Right ventricle myocardium inferior (tissue), 1 donor: ENCODE measurements at regions of chr22 and their contacts with region 1.

Region 1: DNA sequence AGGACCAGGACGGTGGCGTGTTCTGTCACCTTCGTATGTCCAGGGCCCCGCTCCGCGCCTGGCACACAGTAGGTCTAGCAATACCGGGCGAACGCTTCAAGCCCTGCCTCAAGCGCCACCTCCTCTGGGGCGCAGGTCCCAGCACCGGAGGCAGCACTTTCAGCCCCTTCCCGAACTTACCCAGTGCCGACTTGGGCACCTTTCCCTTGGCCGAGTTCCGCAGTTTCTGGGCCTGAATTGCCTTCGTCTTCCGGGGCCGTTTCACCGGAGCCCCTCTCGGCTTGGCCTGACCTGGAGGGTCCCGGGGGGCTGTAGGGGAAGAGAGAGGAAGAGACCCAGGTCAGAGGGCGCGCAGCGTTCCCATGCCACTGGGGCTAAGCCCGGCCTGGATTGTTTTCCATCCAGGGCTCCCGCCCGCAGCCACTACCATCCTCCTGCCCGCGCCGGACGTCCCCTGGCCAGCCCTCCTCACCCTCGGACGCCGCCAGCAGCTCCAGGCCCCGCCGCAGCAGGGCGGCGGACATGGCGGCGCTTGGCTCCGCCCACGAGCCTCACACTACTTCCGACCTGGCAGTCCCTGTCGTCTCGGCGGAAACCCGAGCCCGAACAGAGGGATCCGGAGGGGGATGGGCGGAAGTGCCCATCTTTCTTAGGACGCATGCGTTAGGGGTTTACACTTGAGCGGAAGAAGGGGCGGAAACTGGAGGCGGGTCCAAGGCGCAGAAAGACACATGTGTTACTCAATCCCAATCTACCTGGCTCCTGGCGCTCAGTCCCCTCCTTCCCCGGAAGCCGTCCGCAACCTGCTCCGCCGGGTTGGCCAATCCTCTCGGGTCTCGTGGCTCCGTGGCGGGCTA is at the start of gene RPS19BP1:
- DNase-seq: peak; percentile 99
- ATAC-seq: peak; percentile 93
- total RNA-seq, gene RPS19BP1: 61.9 TPM

Region 2: GRCh38 chr22:39152511-39153219 is 379.8 kb before region 1 on chr22 and contains the start of gene CBX7:
- intact Hi-C with region 1: loop called (anchors 5 kb)
- DNase-seq: peak; percentile 98
- ATAC-seq: peak; percentile 92
- total RNA-seq, gene CBX7: 66.0 TPM

Region 3: GRCh38 chr22:39319270-39320022 is 213.0 kb before region 1 on chr22 and contains the start of gene RPL3:
- intact Hi-C with region 1: loop called (anchors 5 kb)
- DNase-seq: peak; percentile 99
- ATAC-seq: peak; percentile 93
- total RNA-seq, gene RPL3: 355 TPM

Region 4: GRCh38 chr22:39343259-39344048 is 189.0 kb before region 1 on chr22:
- intact Hi-C with region 1: loop called (anchors 2 kb)
- DNase-seq: peak; percentile 68
- ATAC-seq: peak; percentile 68

Region 5: GRCh38 chr22:39490135-39490798 is 42.2 kb before region 1 on chr22:
- intact Hi-C with region 1: loop called (anchors 5 kb)
- DNase-seq: peak; percentile 94
- ATAC-seq: peak; percentile 93

Region 6: DNA sequence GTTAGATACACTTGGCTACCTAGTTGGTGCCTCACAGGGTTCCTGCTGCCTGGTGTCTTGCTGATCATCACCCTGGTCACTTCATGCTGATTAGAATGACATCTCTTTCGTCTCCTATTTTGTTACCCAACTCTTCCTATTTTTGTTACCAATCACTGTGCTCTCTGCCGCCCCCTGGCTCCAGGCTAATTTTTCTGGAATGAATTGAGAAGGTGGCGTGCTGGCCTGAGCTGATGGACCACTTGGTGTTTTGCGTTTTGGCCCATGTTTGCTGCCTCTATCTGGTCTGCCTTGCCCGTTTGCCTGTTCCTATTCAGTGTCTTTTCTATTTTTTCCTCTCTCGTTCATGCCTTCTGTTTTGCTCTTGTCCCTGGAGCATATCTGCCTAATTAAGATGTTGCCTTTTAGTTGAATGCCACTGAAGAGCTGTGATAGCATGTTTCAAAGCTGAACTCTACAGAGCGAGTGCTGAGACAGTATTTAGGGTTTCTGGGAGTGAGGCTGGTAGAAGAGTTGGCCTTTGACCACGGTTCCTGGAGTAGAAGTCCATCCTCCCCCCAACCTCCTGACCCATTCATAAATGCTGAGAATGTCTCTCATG is 18.0 kb before region 1 on chr22:
- intact Hi-C with region 1: no loop called
- DNase-seq: no peak
- ATAC-seq: peak; percentile 45

Region 7: DNA sequence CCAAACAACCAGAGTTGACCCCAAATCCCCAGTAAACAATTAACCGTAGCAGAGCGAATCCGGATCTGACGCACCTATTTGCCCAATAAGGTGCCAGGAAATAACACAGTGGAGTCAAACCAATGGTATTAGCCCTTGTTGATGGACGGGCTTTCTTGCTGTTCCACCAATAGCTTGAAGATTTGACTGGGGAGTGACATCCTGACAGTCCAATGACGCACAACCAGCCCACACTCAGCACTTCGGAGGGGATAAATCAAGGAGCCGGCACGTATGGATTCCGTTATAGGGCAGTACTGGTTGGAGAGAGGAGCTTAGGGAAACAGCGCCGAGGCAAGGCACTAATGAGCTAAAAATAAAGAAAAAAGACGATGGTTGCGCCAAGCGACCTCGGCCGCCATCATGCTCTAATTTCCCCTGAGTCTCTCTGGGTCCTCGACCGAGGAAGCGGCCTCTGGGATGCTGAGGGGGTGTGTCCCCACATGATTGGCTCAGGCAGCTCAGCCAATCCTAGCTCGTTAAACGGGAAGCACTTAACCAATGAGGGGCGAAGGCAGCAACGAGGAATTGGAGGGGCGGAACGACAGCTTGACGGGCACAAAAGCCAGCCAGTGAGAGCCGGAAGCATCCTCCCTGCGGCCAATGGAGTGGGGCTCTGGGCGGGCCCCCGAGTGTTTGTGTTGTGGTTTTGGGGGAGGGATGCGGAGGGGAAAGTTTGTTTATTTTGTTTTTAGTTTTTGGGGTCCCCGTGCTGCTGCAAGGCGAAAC is 511.8 kb after region 1 on chr22:
- intact Hi-C with region 1: loop called (anchors 5 kb)
- DNase-seq: peak; percentile 97
- ATAC-seq: peak; percentile 95

Region 8: DNA sequence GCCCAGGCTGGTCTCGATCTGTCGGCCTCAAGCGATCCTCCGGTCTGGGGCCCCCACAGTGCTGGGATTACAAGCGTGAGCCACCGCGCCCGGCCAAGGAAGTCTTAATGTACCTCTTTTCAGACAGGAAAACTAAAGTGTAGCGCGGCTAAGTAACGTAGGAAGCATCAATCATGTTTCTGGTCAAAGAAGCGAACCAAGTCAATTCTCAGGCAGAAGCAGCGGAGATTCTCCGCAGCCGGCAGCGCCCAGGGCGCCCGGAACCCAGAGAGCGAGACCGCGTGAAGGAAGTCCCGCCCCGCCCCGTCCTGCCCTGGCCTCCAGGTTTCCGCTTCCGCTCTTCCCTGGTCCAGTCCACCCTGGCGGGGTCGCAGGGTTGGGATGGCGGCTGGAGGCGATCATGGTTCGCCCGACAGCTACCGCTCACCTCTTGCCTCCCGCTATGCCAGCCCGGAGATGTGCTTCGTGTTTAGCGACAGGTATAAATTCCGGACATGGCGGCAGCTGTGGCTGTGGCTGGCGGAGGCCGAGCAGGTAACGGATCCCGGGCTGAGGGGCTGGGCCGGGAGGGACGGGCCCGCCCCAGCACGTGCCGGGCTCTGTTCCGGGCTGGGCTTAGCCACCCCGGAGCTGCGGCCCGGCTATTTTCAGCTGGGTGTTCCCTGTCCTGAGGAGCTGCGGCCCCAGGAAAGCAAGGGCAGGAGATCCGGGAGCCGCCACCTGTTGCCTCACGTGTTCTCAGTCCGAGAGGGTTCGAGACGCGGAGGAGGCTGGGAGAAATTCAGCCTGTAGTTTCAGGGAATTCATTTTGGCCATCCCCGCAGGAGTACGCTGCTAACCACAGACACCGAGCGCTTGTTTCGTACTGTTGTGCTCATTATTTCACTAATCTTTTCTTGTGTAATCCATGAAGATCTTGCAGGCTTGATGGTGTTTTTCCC is 814.0 kb after region 1 on chr22 and contains the start of gene ADSL:
- intact Hi-C with region 1: loop called (anchors 2 kb)
- DNase-seq: peak; percentile 94
- ATAC-seq: peak; percentile 98
- total RNA-seq, gene ADSL: 55.3 TPM